Sciatic nerve (tissue), 2 donors: ENCODE measurements at regions of chr1 and their contacts with region 1.

Region 1: GRCh38 chr1:245915406-245915805 is 591.7 kb downstream of the SMYD3 start:
- DNase-seq: no peak
- ATAC-seq: no peak

Region 2: GRCh38 chr1:245131026-245131393 is 784.4 kb before region 1 on chr1:
- intact Hi-C with region 1: no loop called
- DNase-seq: peak; percentile 14
- ATAC-seq: no peak

Region 3: DNA sequence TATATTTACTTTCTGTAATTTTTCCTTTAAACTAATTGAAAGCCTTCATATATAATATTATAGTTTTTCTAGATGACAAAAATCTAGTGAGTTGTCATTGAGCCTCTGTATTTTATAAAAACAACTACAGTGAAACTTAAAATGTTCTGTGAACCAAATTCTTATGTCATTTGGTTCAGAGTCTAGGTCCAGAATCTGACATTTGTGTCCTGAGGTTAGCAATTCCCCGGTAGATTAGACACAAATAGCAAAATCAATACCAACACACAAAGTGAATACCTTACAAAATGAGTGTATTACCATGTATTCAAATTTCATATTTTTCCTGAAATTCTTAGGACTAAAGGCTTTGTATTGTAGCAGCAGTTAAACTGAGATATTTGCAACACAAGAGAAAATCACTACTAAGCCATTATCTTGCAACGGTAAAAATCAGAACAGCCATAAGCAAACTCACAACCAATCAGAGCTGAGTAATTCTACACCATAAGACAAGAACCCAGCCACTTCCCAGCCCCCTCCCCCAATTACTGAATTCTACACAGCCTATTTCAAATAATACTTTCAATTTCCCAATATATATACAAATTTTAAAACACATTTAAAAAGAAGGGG is 18.1 kb after region 1 on chr1:
- intact Hi-C with region 1: loop called (anchors 1 kb)
- DNase-seq: no peak
- ATAC-seq: no peak

Region 4: DNA sequence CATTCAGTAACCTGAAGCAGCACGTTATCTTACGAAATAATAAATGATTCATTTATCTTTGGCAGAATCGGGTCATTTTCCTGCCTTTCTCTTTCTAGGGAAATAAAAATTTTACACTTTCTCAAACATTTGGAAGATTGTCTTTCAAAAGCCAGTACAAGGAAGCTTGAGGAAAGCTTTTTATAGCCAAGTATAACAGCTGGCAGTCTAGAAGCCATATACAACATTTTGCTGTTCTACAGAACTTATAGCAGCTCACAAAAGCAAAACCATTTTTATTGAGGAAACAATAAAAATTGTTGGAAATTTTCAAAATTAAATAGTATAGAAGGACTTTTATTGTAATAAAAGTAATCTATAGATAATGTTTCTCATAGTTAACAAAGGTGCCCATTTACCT is 143.1 kb after region 1 on chr1:
- intact Hi-C with region 1: no loop called
- DNase-seq: no peak
- ATAC-seq: no peak